ENCODE measurements at regions of chr12 and their contacts with region 1.

Region 1: GRCh38 chr12:79006306-79006705 is 141.7 kb downstream of the SYT1 start:
- DNase-seq: peak in 1 of 2 experiments; percentile 2
- H3K4me3 ChIP-seq: no peak overlapping the region
- H3K27ac ChIP-seq: no peak overlapping the region
- H3K4me1 ChIP-seq: no peaks in the 10 kb centered on the region
- H3K27me3 ChIP-seq: no peaks in the 10 kb centered on the region
- CTCF ChIP-seq: peak; percentile 55; the same call in 1 of the 2 replicates

Region 2: DNA sequence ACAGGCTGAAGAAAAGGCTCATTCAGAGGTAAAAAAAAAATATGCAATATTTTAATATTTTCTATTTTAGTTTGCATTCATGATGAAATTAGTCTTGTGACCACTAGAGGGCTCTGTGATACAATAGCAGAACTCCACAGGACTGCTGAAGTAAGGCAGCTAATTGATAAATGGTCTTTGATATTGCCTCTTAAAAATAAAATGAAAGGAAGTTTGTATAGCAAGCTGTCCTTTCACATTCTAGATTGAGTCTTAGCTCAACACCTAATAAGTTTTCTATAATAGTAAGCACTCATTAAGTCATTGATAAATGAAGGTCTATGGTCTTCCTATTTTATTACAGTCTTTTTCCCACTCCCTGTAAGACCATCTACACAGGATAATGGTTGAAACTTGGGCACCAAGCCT is 859.9 kb before region 1 on chr12:
- CTCF ChIA-PET with region 1: no interaction called
- POLR2A ChIA-PET with region 1: no interaction called
- intact Hi-C with region 1: loop called (anchors 2 kb)
- DNase-seq: no peak
- H3K4me3 ChIP-seq: no peak overlapping the region
- H3K27ac ChIP-seq: no peak overlapping the region
- H3K4me1 ChIP-seq: no peaks in the 10 kb centered on the region
- H3K27me3 ChIP-seq: no peaks in the 10 kb centered on the region
- CTCF ChIP-seq: peak; percentile 86

Region 3: GRCh38 chr12:78470354-78471195 is 535.7 kb before region 1 on chr12:
- CTCF ChIA-PET with region 1: interaction called, 3 read pairs
- POLR2A ChIA-PET with region 1: no interaction called
- intact Hi-C with region 1: loop called (anchors 1 kb)
- DNase-seq: peak in 1 of 2 experiments; percentile 9
- H3K4me3 ChIP-seq: no peak overlapping the region
- H3K27ac ChIP-seq: no peak overlapping the region
- H3K4me1 ChIP-seq: no peaks in the 10 kb centered on the region
- H3K27me3 ChIP-seq: no peaks in the 10 kb centered on the region
- CTCF ChIP-seq: peak; percentile 71

Region 4: DNA sequence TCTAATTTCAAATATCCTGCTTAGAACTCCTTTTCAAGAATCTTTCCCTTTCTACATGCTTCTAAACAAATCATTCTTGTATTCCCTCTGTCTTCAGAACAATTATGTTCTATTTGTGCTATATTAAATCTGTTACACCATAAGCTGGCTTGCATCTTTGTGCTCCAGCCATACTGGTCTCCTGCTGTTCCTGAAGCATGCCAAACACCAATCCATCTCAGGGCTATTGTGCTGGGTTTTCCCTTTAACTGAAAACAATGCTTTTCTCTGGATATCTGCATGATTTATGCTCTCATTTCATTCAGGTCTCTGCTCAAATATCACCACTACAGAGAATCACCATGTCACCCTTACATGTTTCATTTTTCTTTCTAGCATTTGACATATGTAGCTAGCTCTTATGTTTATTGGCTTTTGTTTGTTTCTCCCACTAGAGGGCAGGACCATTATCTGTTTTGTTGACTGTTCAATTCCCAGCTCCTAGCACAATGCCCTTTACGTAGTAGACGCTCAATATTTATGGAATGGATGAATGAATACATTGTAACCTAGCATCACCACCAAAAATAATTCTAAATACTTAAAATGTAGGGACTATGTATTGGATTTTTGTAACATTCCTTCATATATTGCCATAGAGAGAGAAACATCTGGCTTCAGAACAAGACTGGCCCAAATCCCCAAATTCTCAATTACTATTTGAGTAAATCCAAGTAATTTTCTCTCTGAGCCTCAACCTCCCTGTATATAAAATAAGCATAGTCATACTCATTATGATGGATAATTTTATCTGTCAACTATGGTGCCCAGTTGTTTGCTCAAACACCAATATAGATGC is 443.7 kb before region 1 on chr12:
- CTCF ChIA-PET with region 1: no interaction called
- POLR2A ChIA-PET with region 1: no interaction called
- intact Hi-C with region 1: loop called (anchors 1 kb)
- DNase-seq: no peak
- H3K4me3 ChIP-seq: no peak overlapping the region
- H3K27ac ChIP-seq: no peak overlapping the region
- H3K4me1 ChIP-seq: no peaks in the 10 kb centered on the region; the same call in 1 of the 2 replicates
- H3K27me3 ChIP-seq: no peaks in the 10 kb centered on the region
- CTCF ChIP-seq: peak; percentile 54

Region 5: DNA sequence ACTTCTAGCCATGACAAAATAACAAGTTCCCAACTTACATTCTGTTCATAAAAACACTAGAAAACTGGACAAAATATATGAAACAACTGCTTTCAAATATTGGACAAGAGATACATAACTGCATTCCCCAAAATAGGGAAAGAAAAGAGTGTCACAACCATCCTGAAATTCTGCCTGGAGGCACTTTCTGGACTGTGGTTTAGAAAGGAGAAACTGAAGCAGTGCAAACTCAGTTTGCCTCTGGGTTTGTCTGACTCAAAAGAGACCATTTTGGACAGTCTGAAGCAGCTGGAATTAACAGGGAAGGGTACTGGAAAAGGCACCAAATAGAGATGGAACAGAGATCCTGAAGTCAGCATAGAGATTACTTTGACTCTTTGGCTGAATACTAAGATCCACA is 153.1 kb before region 1 on chr12:
- CTCF ChIA-PET with region 1: no interaction called
- POLR2A ChIA-PET with region 1: no interaction called
- intact Hi-C with region 1: no loop called
- DNase-seq: no peak
- H3K4me3 ChIP-seq: no peak overlapping the region
- H3K27ac ChIP-seq: no peak overlapping the region
- H3K4me1 ChIP-seq: no peaks in the 10 kb centered on the region
- H3K27me3 ChIP-seq: no peaks in the 10 kb centered on the region
- CTCF ChIP-seq: no peak

Region 6: GRCh38 chr12:78863482-78864402 is 142.6 kb before region 1 on chr12:
- CTCF ChIA-PET with region 1: no interaction called
- POLR2A ChIA-PET with region 1: no interaction called
- intact Hi-C with region 1: loop called (anchors 5 kb)
- DNase-seq: peak; percentile 43 to 56
- H3K4me3 ChIP-seq: peak overlapping the region; percentile 96
- H3K27ac ChIP-seq: peak overlapping the region; percentile 10; the same call in 1 of the 2 replicates
- H3K4me1 ChIP-seq: 0 out of 2 replicates have a peak, but pooled peaks cover 7% of the 10 kb centered on the region
- H3K27me3 ChIP-seq: no peaks in the 10 kb centered on the region
- CTCF ChIP-seq: no peak

Region 7: DNA sequence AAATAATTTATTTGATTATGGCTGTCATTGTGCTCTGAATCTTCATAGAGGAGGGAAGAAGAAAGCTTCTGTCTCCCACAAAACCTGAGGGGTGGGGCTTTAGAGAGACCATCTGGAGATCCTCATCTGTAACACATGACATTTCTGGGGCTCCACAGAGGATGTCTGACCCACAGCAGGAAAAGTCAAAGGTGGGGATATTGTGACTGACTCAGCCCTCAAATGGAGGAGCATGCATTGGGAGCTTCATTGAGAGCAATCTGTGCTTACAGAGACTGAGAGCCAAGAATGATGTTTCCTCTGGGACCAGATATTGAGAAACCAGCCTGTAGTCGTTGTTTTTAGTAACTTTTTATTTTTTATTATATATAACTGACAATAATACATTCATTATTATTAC is 17.0 kb after region 1 on chr12:
- CTCF ChIA-PET with region 1: no interaction called
- POLR2A ChIA-PET with region 1: no interaction called
- intact Hi-C with region 1: no loop called
- DNase-seq: no peak
- H3K4me3 ChIP-seq: no peak overlapping the region
- H3K27ac ChIP-seq: no peak overlapping the region
- H3K4me1 ChIP-seq: no peaks in the 10 kb centered on the region
- H3K27me3 ChIP-seq: no peaks in the 10 kb centered on the region
- CTCF ChIP-seq: no peak

Region 8: DNA sequence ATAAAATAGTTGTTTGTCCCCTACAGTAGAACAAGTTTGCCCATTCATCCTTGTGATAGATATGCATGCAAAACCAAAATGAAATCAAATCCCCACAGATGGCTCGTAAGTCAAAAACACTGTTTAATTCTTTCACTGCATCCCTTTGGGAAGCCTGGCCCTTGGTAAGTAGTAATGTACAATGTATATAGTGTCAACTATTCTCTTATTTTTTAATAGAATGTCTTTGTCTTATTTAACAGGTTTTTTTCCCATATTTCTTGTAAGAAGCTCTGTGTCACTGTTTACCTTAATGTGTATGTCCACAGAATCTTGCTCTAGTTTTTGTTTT is 39.3 kb after region 1 on chr12:
- CTCF ChIA-PET with region 1: no interaction called
- POLR2A ChIA-PET with region 1: no interaction called
- intact Hi-C with region 1: no loop called
- DNase-seq: no peak
- H3K4me3 ChIP-seq: no peak overlapping the region
- H3K27ac ChIP-seq: no peak overlapping the region
- H3K4me1 ChIP-seq: no peaks in the 10 kb centered on the region
- H3K27me3 ChIP-seq: no peaks in the 10 kb centered on the region
- CTCF ChIP-seq: no peak

Region 9: DNA sequence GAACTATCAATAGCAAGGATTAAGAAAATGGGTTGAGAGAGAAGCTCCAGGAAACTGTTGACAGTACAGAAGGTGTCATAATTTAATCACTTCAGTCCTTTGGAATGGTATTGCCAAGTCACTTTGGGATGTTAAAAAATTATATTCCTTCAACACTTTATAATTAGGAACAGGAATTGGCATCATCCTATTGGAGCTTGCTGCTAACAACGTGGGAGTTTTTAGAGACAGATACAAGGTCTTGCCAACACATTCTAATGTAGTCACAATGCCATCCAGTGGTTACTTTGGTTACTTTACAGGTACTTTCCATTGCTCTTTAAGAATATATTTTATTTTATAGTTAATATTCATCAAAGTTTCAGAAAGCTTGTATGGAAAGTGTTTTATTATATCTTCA is 168.3 kb after region 1 on chr12:
- CTCF ChIA-PET with region 1: no interaction called
- POLR2A ChIA-PET with region 1: no interaction called
- intact Hi-C with region 1: loop called (anchors 5 kb)
- DNase-seq: no peak
- H3K4me3 ChIP-seq: no peak overlapping the region
- H3K27ac ChIP-seq: no peak overlapping the region
- H3K4me1 ChIP-seq: no peaks in the 10 kb centered on the region
- H3K27me3 ChIP-seq: no peaks in the 10 kb centered on the region
- CTCF ChIP-seq: peak; percentile 67

Region 10: DNA sequence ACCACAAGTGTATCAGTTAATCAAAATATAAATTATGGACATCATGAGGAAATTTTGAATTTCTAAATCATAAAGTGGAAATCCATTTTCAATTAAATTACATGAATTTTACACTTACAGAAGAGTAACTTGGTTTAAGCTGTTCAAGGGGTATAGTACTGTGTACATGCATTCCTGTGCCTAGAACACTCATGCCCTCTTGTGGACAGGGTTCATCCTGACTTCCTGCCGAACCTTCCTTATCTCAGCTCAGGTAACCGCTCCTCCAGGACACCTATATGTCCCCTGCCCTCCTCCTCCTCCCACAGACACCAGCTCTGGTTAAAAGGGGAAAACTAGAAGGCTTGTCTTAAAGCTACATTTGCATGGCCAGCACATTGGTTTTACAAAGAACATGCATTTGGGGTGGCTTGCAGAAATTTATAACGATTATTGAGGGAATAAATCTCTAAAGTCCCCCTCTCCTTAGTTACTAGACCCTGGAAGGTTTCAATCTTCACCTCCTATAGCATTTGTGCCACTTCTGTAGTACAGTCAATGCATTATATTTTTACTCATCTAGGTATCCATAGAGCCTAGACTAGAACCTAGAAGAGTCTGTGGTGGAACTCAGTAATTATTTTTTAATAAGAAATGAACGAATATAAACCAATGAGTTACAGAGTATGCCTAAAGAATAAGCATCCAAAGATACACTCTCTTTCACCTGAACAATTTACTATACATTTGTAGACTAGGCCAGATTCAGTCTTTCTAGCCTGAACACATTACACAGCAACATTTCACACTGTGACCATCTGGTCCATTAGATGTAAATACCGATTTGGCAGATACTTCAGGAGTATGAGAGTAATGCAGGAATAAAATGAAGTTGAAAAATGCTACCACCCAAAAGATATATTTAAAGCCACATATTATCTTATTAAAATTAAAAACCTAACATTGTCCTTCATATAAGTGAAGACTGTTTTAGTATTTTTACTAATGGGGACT is 338.8 kb after region 1 on chr12:
- CTCF ChIA-PET with region 1: no interaction called
- POLR2A ChIA-PET with region 1: no interaction called
- intact Hi-C with region 1: loop called (anchors 10 kb)
- DNase-seq: peak in 1 of 2 experiments; percentile 37
- H3K4me3 ChIP-seq: no peak overlapping the region
- H3K27ac ChIP-seq: no peak overlapping the region
- H3K4me1 ChIP-seq: no peaks in the 10 kb centered on the region
- H3K27me3 ChIP-seq: no peaks in the 10 kb centered on the region
- CTCF ChIP-seq: peak; percentile 79

Measured in PC-9 (cell line).